AG04449 (cell line): ENCODE measurements at regions of chr10 and their contacts with region 1.

Region 1: DNA sequence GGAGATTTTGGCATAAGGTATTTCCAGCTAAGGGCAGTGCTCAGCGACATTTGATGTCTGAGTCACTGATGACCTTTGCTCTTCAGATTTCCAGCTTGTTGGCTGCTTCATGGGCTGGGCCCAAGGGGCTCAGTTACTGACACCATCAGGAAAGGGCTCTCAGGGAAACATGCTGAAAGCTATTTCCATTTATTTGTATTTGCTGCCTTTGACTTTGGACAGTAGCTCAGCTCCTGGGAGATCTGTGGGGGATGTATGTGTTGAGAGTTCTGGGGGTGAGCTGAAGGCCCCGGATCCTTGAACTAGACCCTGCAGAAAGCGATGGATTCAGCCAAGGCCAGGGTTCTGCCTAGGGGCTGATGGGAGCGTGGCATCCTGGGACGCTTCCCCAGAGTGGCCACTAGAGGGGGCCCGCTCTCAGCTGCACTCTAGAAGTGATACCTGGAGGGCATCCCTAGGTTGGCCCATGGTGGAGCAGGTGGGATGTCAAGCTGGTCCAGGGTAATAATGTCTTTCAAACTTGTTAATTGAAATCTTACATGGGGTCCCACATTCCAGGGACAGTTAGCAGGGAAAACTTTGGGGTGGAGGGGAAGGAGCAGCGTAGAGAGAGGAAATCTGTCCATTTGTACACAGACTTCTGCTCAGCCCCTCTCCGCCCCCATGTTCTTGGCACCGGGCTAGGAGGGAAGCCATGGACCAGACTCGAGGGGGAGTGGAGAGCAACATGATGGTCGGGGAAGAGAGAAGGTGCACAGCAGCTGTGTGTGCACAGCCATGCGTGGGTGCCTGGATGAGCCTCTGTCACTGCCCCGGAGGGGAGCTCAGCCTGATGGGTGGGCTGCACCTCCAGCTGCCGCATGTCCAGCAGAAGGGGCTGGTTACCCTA is 3.0 kb upstream of the BTBD16 start:
- DNase-seq: no peak
- H3K4me3 ChIP-seq: no peak overlapping the region
- CTCF ChIP-seq: peak; percentile 95

Region 2: DNA sequence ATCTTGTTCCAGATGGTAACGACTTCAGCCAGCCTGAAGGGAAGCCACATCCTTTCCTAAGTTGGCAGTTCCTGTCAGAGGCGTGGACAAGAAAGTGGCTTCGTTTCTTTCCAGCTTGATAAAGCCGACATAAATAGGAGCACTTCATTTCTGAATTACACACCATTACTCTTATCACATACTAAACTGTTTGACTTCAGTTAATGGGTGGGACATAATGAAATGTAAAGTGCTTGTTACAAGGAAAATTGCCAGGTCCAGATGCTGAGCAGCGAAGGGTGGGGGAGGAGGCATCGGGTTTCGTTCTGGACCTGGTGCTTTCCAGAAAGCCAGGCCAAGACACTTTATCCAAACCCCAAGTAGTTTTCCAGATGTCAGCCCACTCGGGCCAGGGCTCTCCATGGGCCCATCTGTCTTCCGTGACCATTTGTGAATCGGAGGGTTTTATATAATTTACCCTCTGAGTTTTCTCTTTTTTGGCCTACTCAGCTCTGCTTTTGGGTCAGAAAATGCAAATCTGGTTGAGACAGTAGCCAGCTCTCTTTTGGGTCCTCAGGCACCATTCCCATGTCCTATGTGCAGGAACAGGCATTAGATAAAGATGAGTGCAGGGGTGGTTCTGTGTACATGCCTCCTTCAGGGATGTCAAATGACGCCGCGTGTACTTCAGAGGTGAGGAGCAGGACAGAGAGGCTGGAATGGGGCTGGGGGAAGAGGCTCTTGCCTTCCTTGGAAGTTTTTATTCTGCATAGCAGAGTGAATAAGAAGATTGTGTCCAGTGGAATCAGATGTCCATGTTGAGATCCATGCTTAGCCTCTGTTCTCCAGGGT is 188.9 kb before region 1 on chr10:
- CTCF ChIA-PET with region 1: no interaction called
- POLR2A ChIA-PET with region 1: no interaction called
- DNase-seq: no peak
- H3K4me3 ChIP-seq: no peak overlapping the region
- CTCF ChIP-seq: no peak

Region 3: GRCh38 chr10:122102869-122103525 is 165.1 kb before region 1 on chr10:
- CTCF ChIA-PET with region 1: interaction called, 10 read pairs
- POLR2A ChIA-PET with region 1: no interaction called
- DNase-seq: no peak
- H3K4me3 ChIP-seq: no peak overlapping the region
- CTCF ChIP-seq: no peak

Region 4: GRCh38 chr10:122244001-122244975 is 23.8 kb before region 1 on chr10:
- CTCF ChIA-PET with region 1: interaction called, 11 read pairs
- POLR2A ChIA-PET with region 1: no interaction called
- DNase-seq: no peak
- H3K4me3 ChIP-seq: no peak overlapping the region
- CTCF ChIP-seq: no peak

Region 5: GRCh38 chr10:122279725-122280141 is 11.6 kb after region 1 on chr10:
- CTCF ChIA-PET with region 1: interaction called, 91 read pairs
- POLR2A ChIA-PET with region 1: no interaction called
- DNase-seq: no peak
- H3K4me3 ChIP-seq: no peak overlapping the region
- CTCF ChIP-seq: peak; percentile 73

Region 6: DNA sequence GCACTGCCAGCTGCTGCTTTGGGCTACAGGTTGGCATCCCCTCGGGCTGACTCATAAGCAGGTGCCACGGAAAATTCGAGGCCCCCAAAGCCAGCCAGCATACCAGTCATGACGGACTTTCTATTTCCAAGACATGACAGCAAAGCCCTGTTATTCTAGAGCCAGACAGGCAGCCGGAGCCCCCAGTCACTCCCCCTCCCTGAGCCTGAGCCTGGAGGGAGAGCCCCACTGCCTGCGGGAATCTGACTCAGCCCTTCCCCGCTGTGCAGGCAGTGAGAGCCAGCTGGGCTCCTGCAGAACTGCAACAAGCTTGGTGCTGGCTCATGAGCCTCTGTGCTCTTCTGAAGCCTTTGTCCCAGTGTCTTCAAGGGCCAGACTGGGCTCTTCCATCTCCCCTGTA is 18.8 kb after region 1 on chr10:
- CTCF ChIA-PET with region 1: interaction called, 14 read pairs
- POLR2A ChIA-PET with region 1: no interaction called
- DNase-seq: no peak
- H3K4me3 ChIP-seq: no peak overlapping the region
- CTCF ChIP-seq: no peak

Region 7: DNA sequence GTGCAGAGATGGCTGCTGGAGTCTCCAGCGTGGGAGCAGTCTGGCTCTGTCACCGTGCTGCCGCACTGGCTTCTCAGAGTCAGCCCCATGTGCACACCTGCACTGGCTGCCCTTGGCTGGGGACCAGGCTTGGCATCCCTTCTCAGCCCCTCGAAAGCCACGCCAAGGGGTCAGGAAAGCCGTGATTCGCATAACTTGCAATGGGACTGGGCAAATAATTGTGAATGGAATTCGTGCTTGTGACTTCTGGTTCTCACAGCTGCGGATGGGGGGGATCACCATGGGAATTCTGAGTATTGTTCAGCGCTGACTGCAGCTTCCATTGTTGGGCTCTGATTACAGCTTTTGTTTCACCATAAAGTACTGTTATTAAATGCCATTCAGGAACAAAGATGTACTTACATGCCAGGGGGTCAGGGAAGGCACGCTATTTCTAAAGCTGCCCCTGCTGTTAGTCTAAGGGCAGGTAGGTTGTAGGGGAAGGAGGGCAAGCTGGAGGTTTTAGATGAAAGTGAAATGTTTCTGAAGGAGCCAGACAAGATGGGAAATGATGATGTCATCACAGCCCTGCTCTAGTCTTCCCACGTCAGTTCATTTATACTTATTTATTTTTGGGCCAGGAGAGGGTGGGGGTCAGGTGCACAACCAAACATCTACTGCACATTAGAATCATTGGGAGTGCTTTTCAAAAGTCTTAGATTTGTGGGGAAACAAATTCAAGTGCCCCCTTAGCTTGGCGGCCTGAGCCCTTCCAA is 100.6 kb after region 1 on chr10:
- CTCF ChIA-PET with region 1: no interaction called
- POLR2A ChIA-PET with region 1: no interaction called
- DNase-seq: no peak
- H3K4me3 ChIP-seq: no peak overlapping the region
- CTCF ChIP-seq: no peak